ENCODE measurements at regions of chr11 and their contacts with region 1.

Region 1: DNA sequence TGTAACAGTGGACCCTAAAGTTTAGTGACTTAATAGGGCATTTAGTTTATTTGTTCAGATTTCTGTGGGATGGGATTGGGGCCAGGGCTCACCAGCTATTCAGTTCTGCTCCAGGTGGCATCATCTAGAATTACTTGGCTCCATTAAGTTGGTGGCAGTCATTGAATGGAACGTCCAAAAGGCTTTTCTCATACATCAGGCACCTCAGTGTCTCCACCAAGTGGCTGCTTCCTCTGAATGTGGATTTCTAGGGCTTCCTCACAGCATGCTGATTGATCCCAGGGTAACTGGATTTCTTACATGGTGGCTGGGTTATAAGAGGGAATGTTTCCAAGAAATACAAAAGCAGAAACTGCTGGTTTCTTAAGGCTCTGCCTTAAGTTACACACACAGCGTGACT is 34.7 kb downstream of the USP47 start:
- DNase-seq: no peak
- ATAC-seq: peak; percentile 61
- H3K4me3 ChIP-seq: no peak overlapping the region
- H3K27ac ChIP-seq: no peak overlapping the region
- H3K4me1 ChIP-seq: peaks cover 4% of the 10 kb centered on the region; the same call in 1 of the 2 replicates
- H3K27me3 ChIP-seq: no peaks in the 10 kb centered on the region
- CTCF ChIP-seq: peak; percentile 3 to 29 (median 23); a peak in 2 of 6 replicates
- EP300 ChIP-seq: no peak
- POLR2A ChIP-seq: no peak
- RAD21 ChIP-seq: no peak

Region 2: DNA sequence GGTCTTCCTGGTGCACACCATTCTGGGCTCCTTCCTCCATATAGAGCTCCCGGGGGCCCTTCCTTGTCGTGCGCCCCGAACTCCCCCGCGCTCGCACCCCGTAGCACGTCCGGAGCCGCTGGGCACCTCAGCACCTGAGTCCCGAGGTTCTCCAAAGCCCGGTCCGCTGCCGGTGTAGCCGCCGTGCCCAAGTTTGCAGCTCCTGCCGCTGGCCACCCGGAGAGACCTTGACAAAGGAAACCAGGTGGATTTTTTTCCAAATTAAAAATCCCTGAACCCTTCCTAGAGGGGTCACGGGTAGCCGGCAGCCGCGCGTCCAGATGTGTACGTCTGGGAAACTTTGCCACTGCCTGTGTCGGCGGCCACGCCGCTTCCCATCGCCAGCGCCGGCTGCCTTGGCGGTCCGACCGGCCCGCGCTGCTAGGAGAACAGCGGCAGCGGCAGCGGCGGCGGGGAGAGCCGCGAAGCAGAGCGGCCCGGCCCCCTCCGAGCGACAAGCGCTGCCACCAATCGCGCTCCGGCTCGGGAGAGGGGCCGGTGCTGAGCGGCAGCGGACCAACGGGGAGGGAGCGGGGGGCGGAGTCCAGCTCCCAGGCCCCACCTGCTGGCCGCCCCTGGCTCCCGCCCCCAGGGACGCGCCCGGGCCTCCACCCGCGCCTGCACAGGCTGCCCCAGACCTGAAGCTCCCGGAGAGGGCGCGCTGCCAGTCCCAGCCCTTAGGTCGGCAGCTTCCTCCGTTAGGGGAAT is 254.7 kb before region 1 on chr11 and contains the start of gene GALNT18:
- CTCF ChIA-PET with region 1: no interaction called
- POLR2A ChIA-PET with region 1: no interaction called
- RAD21 ChIA-PET with region 1: no interaction called
- SMC1A ChIA-PET with region 1: no interaction called
- in situ Hi-C with region 1: no loop called
- intact Hi-C with region 1: no loop called
- DNase-seq: peak; percentile 68
- ATAC-seq: peak; percentile 94
- H3K4me3 ChIP-seq: peak within 1 kb of the TSS; percentile 88
- H3K27ac ChIP-seq: peak within 1 kb of the TSS; percentile 41
- H3K4me1 ChIP-seq: no peaks in the 10 kb centered on the region; the same call in 1 of the 2 replicates
- H3K27me3 ChIP-seq: no peaks in the 10 kb centered on the region; a peak in 1 of 4 replicates
- CTCF ChIP-seq: peak in 2 of 3 experiments; percentile 45 to 46; a peak in 4 of 6 replicates
- EP300 ChIP-seq: no peak
- POLR2A ChIP-seq: peak; percentile 79
- RAD21 ChIP-seq: no peak
- polyA plus RNA-seq, gene GALNT18: 1.2 to 2.0 TPM

Region 3: GRCh38 chr11:11856638-11857037 is 19.8 kb before region 1 on chr11:
- CTCF ChIA-PET with region 1: interaction called, 10 read pairs
- POLR2A ChIA-PET with region 1: no interaction called
- RAD21 ChIA-PET with region 1: interaction called, 3 read pairs
- SMC1A ChIA-PET with region 1: interaction called, 6 read pairs
- in situ Hi-C with region 1: no loop called
- intact Hi-C with region 1: no loop called
- DNase-seq: peak; percentile 52
- ATAC-seq: peak; percentile 83
- H3K4me3 ChIP-seq: no peak overlapping the region
- H3K27ac ChIP-seq: no peak overlapping the region
- H3K4me1 ChIP-seq: peaks cover 7% of the 10 kb centered on the region; the same call in 1 of the 2 replicates
- H3K27me3 ChIP-seq: no peaks in the 10 kb centered on the region
- CTCF ChIP-seq: no peak
- EP300 ChIP-seq: no peak
- POLR2A ChIP-seq: no peak
- RAD21 ChIP-seq: no peak

Region 4: GRCh38 chr11:11866203-11866602 is 10.3 kb before region 1 on chr11:
- CTCF ChIA-PET with region 1: interaction called, 12 read pairs
- POLR2A ChIA-PET with region 1: interaction called, 3 read pairs
- RAD21 ChIA-PET with region 1: interaction called, 3 read pairs
- SMC1A ChIA-PET with region 1: interaction called, 8 read pairs
- in situ Hi-C with region 1: no loop called
- intact Hi-C with region 1: no loop called
- DNase-seq: no peak
- ATAC-seq: peak; percentile 25
- H3K4me3 ChIP-seq: no peak overlapping the region
- H3K27ac ChIP-seq: peak overlapping the region; percentile 11; the same call in 1 of the 2 replicates
- H3K4me1 ChIP-seq: peaks cover 9% of the 10 kb centered on the region
- H3K27me3 ChIP-seq: no peaks in the 10 kb centered on the region
- CTCF ChIP-seq: no peak
- EP300 ChIP-seq: no peak
- POLR2A ChIP-seq: no peak
- RAD21 ChIP-seq: no peak